Right cardiac atrium (tissue), 5 donors: ENCODE measurements at regions of chr5 and their contacts with region 1.

Region 1: GRCh38 chr5:68313336-68313735 is 97.8 kb downstream of the PIK3R1 start:
- DNase-seq: no peak
- ATAC-seq: no peak
- H3K4me3 ChIP-seq: no peak overlapping the region
- H3K27ac ChIP-seq: no peak overlapping the region
- H3K4me1 ChIP-seq: no peaks in the 10 kb centered on the region
- H3K27me3 ChIP-seq: no peaks in the 10 kb centered on the region

Region 2: GRCh38 chr5:68348447-68349222 is 35.3 kb after region 1 on chr5:
- intact Hi-C with region 1: loop called in 1 of 4 experiments (anchors 2 kb)
- DNase-seq: peak in 1 of 3 donors; percentile 59
- ATAC-seq: peak; percentile 15 to 57
- H3K4me3 ChIP-seq: no peak overlapping the region
- H3K27ac ChIP-seq: no peak overlapping the region
- H3K4me1 ChIP-seq: peaks cover 6% of the 10 kb centered on the region
- H3K27me3 ChIP-seq: no peaks in the 10 kb centered on the region